IMR-90 (cell line): ENCODE measurements at regions of chr4 and their contacts with region 1.

Region 1: GRCh38 chr4:169010125-169011023 is at the start of gene CBR4:
- DNase-seq: peak; percentile 99
- ATAC-seq: peak; percentile 98
- H3K4me3 ChIP-seq: peak within 1 kb of the TSS; percentile 78
- H3K27ac ChIP-seq: peak within 1 kb of the TSS; percentile 87
- H3K4me1 ChIP-seq: peaks cover 4% of the 10 kb centered on the region
- H3K27me3 ChIP-seq: no peaks in the 10 kb centered on the region
- CTCF ChIP-seq: peak; percentile 40
- POLR2A ChIP-seq: peak; percentile 86
- RAD21 ChIP-seq: peak; percentile 28
- total RNA-seq, gene CBR4: 4.5 and 9.2 TPM in 2 replicates

Region 2: GRCh38 chr4:168995537-168996295 is 14.7 kb before region 1 on chr4:
- CTCF ChIA-PET with region 1: interaction called, 12 read pairs
- POLR2A ChIA-PET with region 1: interaction called, 6 read pairs
- dilution Hi-C with region 1: no loop called
- in situ Hi-C with region 1: no loop called
- intact Hi-C with region 1: no loop called
- DNase-seq: peak; percentile 19
- ATAC-seq: peak; percentile 27
- H3K4me3 ChIP-seq: no peak overlapping the region
- H3K27ac ChIP-seq: no peak overlapping the region
- H3K4me1 ChIP-seq: no peaks in the 10 kb centered on the region; the same call in 1 of the 2 replicates
- H3K27me3 ChIP-seq: no peaks in the 10 kb centered on the region
- CTCF ChIP-seq: peak; percentile 34
- POLR2A ChIP-seq: no peak
- RAD21 ChIP-seq: peak; percentile 46

Region 3: DNA sequence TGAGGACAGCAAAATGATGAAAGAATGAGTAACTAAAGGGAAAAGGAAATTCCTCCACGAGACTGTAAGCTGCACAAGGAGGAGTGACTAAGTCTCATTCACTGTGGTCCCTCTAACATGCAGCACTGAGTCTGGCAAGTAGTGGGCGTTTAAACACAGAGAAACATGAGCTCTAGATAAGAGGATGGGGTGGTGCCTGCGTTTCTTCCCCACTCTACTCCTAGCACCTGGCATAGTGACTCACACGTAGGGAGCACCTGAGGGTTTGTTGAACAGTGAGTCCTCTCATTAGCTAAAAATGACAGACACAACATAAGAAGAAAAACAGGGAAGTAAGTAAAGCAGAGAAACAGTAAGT is 105.5 kb after region 1 on chr4:
- CTCF ChIA-PET with region 1: interaction called, 6 read pairs
- POLR2A ChIA-PET with region 1: no interaction called
- dilution Hi-C with region 1: no loop called
- in situ Hi-C with region 1: no loop called
- intact Hi-C with region 1: loop called (anchors 5 kb)
- DNase-seq: peak; percentile 99
- ATAC-seq: peak; percentile 97
- H3K4me3 ChIP-seq: no peak overlapping the region
- H3K27ac ChIP-seq: peak overlapping the region; percentile 71; the same call in 1 of the 2 replicates
- H3K4me1 ChIP-seq: peaks cover 18% of the 10 kb centered on the region
- H3K27me3 ChIP-seq: no peaks in the 10 kb centered on the region
- CTCF ChIP-seq: peak; percentile 49
- POLR2A ChIP-seq: peak; percentile 34; the same call in 1 of the 2 replicates
- RAD21 ChIP-seq: peak; percentile 60

Region 4: DNA sequence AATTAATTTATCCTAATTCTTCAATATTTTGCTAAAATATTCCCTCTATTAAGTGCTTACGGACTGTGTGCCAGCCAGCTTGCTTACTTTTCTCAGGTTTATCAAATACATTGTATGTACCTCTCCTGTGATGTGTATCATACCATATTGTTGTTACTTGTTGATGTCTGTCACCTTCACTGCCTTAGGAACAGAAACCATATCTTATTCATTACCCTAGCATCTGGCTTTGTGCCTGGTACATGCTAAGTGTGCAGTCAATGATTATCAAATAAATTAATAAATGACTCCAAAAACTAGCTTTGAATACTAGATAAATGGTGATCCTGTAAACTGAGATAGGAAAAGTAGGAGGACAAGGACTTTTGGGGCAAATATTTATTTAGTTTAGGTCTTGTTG is 616.9 kb after region 1 on chr4:
- CTCF ChIA-PET with region 1: no interaction called
- POLR2A ChIA-PET with region 1: interaction called, 10 read pairs
- dilution Hi-C with region 1: no loop called
- in situ Hi-C with region 1: no loop called
- intact Hi-C with region 1: no loop called
- DNase-seq: no peak
- ATAC-seq: no peak
- H3K4me3 ChIP-seq: no peak overlapping the region
- H3K27ac ChIP-seq: no peak overlapping the region
- H3K4me1 ChIP-seq: no peaks in the 10 kb centered on the region
- H3K27me3 ChIP-seq: no peaks in the 10 kb centered on the region
- CTCF ChIP-seq: no peak
- POLR2A ChIP-seq: no peak
- RAD21 ChIP-seq: no peak

Region 5: DNA sequence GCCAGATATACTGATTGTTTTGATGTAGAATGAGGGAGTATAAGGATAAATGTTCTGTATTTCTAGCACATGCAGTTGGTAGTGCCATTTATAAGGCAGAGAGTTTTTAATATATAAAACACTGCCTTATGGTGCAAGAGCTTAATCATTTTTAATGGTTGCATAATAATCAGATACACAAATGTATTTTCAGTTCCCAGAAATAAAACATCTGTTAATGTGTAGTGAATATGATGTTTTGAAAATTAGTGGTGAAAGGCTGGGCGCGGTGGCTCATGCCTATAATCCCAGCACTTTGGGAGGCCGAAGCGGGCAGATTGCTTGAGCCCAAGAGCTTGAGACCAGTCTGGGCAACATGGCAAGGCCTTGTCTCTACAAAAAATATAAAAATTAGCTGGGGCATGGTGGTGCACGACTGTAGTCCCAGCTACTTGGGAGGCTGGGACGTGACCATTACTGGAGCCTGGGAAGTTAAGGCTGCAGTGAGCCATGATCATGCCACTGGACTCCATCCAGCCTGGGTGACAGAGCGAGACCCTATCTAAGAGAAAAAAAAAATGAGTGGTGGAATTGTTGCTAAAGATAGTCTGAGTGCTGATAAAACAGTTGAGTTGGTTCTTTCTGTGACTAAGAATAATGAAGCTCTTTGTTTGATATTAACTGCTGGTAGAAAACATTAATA is 639.3 kb after region 1 on chr4:
- CTCF ChIA-PET with region 1: no interaction called
- POLR2A ChIA-PET with region 1: no interaction called
- dilution Hi-C with region 1: no loop called
- in situ Hi-C with region 1: no loop called
- intact Hi-C with region 1: no loop called
- DNase-seq: no peak
- ATAC-seq: no peak
- H3K4me3 ChIP-seq: no peak overlapping the region
- H3K27ac ChIP-seq: no peak overlapping the region
- H3K4me1 ChIP-seq: peaks cover 2% of the 10 kb centered on the region; the same call in 1 of the 2 replicates
- H3K27me3 ChIP-seq: no peaks in the 10 kb centered on the region
- CTCF ChIP-seq: no peak
- POLR2A ChIP-seq: no peak
- RAD21 ChIP-seq: no peak